ENCODE measurements at regions of chr11 and their contacts with region 1.

Region 1: DNA sequence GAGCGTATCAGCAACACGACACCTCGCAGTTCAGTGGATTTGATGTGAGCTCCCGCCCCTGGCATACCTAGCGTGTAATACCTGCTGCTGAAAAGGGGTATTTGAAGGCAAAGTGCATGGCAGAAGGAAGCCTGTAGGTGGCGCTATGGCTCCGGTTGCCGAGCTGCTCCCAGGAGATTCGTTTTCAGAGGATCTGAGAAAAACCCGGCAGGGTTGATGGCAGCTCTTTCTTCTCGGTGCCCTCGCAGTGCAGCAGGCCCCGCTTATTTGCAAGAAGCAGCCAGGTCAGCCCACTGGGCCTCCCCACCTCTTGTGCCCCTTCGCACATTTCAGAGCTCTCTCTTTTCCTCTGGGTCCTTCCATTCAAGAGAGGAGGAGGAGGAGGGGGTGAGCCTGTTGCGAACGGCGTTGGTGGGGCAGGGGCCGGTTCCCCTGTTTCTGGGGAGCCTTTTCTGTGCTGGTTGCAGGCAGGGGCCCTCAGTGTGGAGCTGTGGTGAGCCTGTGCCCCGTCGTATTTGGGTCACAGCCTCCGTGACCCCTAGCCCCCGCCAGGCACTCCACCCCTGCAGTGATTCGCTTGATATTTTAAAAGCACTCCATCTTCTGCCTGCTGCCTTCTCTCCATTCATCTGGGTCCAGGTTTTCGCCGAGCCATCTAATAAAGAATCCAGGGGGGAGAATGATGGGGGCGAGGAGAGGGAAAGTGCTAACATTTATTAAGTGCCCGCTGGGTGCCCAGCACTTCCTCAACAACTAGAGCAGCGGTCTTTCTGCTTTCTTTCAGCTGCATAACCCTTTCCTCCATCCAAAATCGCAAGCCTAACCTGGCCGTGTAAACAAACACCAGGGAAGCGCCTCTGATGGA is 85.3 kb upstream of the SYT13 start:
- DNase-seq: peak; percentile 50 to 77
- H3K4me3 ChIP-seq: no peak overlapping the region
- H3K27ac ChIP-seq: no peak overlapping the region
- H3K4me1 ChIP-seq: peaks cover 0 to 4% (median 0%) of the 10 kb centered on the region in 4 donors
- H3K27me3 ChIP-seq: peaks cover 0 to 26% of the 10 kb centered on the region in 2 donors
- CTCF ChIP-seq: peak; percentile 85 to 94

Region 2: DNA sequence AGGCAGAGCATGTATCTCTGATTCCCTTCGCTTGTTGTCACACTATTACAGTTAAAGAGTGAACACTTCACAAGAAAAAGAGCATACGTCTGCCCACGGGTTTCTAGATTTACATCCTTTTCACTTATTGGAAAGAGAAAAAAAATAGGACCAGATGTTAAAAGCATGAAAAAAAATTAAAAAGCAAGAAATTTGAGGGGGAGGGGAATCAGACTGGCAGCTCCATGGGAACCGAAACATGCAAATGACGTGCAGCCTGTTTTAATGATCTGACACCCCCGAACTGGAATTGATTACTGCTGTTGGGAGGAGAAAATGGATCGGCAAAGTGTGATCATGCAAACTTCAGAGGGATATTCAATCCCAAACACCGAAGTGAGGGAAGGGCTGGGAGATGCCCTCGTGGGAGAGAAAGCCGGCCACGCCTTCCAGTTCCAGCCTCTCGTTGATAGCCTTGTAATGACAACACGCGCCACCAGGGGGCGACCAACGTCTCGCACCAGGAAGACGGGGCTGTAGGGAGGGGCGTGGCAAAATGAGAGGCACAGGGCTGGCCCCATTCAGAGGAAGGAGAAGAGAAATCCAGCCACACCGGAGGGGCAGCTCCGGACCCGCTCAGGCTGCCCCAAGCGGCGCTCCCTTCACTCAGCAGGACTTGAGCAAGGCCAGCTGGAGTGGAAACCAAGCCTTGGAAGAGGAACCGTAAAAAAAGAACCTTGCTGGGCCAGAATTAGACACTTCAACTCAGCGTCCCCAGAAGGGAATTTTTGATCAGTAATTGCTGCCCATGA is 31.6 kb before region 1 on chr11:
- intact Hi-C with region 1: no loop called
- DNase-seq: peak; percentile 95 to 96
- H3K4me3 ChIP-seq: peak overlapping the region; percentile 14 to 19
- H3K27ac ChIP-seq: peak overlapping the region in 1 of 2 donors; percentile 38
- H3K4me1 ChIP-seq: peaks cover 0 to 9% (median 2%) of the 10 kb centered on the region in 4 donors
- H3K27me3 ChIP-seq: peaks cover 0 to 4% of the 10 kb centered on the region in 2 donors
- CTCF ChIP-seq: peak; percentile 90 to 93

Region 3: DNA sequence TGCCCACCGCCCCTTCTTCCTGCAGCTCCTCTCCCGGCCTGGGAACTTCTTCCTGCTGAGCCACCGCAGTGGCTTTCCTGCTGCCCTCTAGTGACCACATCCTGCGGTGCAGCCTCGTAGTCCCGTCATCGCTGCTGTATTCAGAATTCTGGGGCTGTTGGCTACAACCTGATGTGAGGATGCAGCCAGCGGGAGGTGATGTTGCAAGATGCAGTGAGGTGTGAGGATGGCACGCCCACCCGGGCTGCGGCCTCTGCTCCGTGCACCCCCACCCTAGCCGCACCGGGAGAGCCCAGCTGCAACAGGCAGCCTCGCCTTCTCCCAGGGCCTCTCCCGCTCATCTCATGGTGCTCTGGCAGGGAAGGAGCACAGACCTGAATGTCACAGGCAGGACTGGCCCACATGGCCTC is 283.9 kb after region 1 on chr11:
- intact Hi-C with region 1: loop called (anchors 10 kb)
- DNase-seq: peak; percentile 64 to 85
- H3K4me3 ChIP-seq: no peak overlapping the region
- H3K27ac ChIP-seq: no peak overlapping the region
- H3K4me1 ChIP-seq: peaks cover 0 to 54% (median 16%) of the 10 kb centered on the region in 4 donors
- H3K27me3 ChIP-seq: peaks cover 0 to 31% of the 10 kb centered on the region in 2 donors
- CTCF ChIP-seq: peak; percentile 89 to 96

Region 4: GRCh38 chr11:45771566-45772448 is 400.3 kb after region 1 on chr11:
- intact Hi-C with region 1: loop called (anchors 5 kb)
- DNase-seq: peak; percentile 84 to 91
- H3K4me3 ChIP-seq: peak overlapping the region; percentile 48 to 59
- H3K27ac ChIP-seq: peak overlapping the region; percentile 73 to 75
- H3K4me1 ChIP-seq: peaks cover 0 to 11% (median 1%) of the 10 kb centered on the region in 4 donors
- H3K27me3 ChIP-seq: no peaks in the 10 kb centered on the region
- CTCF ChIP-seq: peak; percentile 95 to 97